ENCODE measurements at regions of chr1 and their contacts with region 1.

Region 1: DNA sequence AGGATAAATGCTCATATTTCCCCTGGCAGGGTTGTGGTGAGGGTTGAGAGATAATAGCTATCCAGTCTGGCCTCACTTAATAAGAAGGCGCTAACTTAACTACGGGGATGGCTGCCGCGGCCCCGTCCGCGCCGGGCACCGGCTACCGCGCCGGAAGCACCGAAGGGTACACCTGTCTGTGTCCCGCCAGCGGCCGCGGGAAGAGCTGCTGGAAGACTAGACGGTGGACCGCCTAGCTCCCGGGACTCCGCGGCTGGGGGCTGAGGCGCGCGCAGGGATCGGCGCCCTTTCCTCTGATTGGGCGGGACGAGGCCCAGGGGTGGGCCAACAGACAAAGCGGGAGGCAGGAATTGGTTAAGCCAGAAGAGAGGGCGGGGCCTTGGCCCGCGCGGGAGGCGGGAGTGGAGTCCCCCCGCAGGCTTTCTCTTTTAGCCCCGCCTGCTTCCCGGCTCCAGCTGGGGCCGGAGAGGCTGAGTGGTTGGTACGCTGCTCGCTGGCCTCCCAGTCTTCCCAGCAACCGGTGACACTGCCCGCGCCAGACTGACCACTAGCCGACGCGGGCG is at the start of gene ZNF672:
- DNase-seq: peak; percentile 97 to 98
- H3K4me3 ChIP-seq: peak within 1 kb of the TSS; percentile 87
- H3K4me3 Mint-ChIP-seq: no peak within 1 kb of the TSS
- H3K27ac Mint-ChIP-seq: peak within 1 kb of the TSS; percentile 95
- H3K4me1 ChIP-seq: no peaks in the 10 kb centered on the region
- H3K4me1 Mint-ChIP-seq: no peaks in the 10 kb centered on the region
- H3K27me3 ChIP-seq: no peaks in the 10 kb centered on the region
- H3K27me3 Mint-ChIP-seq: peaks cover 3% of the 10 kb centered on the region
- CTCF ChIP-seq: no peak
- total RNA-seq, gene ZNF672: 27.3 and 29.1 TPM in 2 replicates

Region 2: DNA sequence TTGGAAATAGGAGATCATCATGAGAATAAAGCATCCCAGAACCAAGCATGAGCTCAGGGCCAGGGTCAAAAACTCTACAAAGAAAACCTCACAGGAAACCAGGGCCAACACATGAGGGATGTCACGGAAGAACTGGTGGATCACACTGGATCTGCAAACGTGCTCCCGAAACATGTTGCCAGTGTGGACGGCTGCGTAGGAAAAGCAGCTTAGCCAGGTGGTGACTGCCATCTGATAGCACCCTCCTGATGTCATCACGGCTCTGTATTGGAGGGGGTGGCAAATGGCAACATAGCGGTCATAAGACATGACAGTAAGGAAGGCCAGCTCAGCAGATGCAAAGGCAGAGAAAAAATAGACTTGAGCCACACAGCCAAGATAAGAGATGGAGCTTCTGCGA is 156.2 kb before region 1 on chr1:
- CTCF ChIA-PET with region 1: no interaction called
- POLR2A ChIA-PET with region 1: no interaction called
- intact Hi-C with region 1: no loop called
- DNase-seq: no peak
- H3K4me3 ChIP-seq: no peak overlapping the region
- H3K4me3 Mint-ChIP-seq: no peak overlapping the region
- H3K27ac Mint-ChIP-seq: no peak overlapping the region
- H3K4me1 ChIP-seq: no peaks in the 10 kb centered on the region
- H3K4me1 Mint-ChIP-seq: no peaks in the 10 kb centered on the region
- H3K27me3 ChIP-seq: no peaks in the 10 kb centered on the region
- H3K27me3 Mint-ChIP-seq: no peaks in the 10 kb centered on the region
- CTCF ChIP-seq: no peak

Region 3: GRCh38 chr1:248739572-248740205 is 98.2 kb before region 1 on chr1:
- CTCF ChIA-PET with region 1: no interaction called
- POLR2A ChIA-PET with region 1: no interaction called
- intact Hi-C with region 1: no loop called
- DNase-seq: no peak
- H3K4me3 ChIP-seq: no peak overlapping the region
- H3K4me3 Mint-ChIP-seq: no peak overlapping the region
- H3K27ac Mint-ChIP-seq: no peak overlapping the region
- H3K4me1 ChIP-seq: no peaks in the 10 kb centered on the region
- H3K4me1 Mint-ChIP-seq: no peaks in the 10 kb centered on the region
- H3K27me3 ChIP-seq: no peaks in the 10 kb centered on the region
- H3K27me3 Mint-ChIP-seq: no peaks in the 10 kb centered on the region
- CTCF ChIP-seq: no peak

Region 4: GRCh38 chr1:248807067-248807737 is 30.7 kb before region 1 on chr1:
- CTCF ChIA-PET with region 1: no interaction called
- POLR2A ChIA-PET with region 1: no interaction called
- intact Hi-C with region 1: no loop called
- DNase-seq: peak; percentile 64 to 65
- H3K4me3 ChIP-seq: no peak overlapping the region
- H3K4me3 Mint-ChIP-seq: no peak overlapping the region
- H3K27ac Mint-ChIP-seq: no peak overlapping the region
- H3K4me1 ChIP-seq: no peaks in the 10 kb centered on the region
- H3K4me1 Mint-ChIP-seq: peaks cover 7% of the 10 kb centered on the region
- H3K27me3 ChIP-seq: no peaks in the 10 kb centered on the region
- H3K27me3 Mint-ChIP-seq: no peaks in the 10 kb centered on the region
- CTCF ChIP-seq: peak; percentile 72 to 82

Region 5: DNA sequence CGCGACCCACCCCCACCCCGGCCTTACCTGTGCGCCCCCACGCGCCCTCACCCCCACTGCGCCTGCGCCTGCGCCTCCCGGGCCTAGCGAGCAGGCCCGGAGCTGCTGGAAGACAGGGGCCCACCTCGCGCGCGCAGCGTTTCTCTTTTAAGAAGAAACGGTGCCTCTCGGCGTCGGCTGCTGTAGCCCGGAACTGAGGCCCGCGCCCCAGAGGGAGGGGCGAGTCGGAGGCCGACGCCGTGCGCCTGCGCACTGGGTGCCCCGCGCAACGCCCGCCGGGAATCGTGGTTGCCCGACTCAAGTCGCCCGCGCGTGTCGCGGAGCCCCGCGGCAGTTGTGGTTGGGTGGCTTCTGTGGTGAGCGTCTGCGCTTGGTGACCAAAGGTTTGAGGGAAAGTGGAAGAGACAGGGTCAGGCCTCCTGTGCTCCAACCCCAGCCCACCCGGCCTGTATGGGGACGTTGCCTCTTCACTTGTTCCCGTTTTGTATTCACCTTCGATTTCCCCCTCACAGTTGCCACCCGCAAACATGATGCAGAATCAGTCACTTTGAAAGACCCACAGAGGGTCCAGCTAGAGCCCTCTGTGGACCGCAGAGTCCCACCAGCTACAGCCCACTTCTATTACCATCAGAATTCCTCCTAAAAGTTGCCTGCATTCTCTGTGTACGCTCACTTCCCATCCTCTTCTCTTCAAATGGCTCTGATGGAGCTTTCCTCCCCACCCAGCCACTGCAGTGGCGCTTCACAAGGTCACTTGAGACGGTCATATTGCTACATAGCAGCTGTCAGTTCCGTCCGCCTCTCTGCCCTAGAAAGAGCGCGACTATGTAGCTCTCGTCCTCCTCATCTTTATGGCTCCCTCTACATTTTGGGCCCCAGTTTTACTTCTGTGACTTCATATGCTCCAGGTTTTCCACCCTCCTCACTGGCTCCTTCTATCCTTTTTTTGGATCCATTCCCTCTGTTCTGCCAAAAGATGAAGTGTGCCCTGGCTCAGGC is 21.3 kb after region 1 on chr1 and contains the start of gene ZNF692:
- CTCF ChIA-PET with region 1: interaction called, 20 read pairs
- POLR2A ChIA-PET with region 1: interaction called, 38 read pairs
- intact Hi-C with region 1: loop called (anchors 1 kb)
- DNase-seq: peak; percentile 97
- H3K4me3 ChIP-seq: peak within 1 kb of the TSS; percentile 71
- H3K4me3 Mint-ChIP-seq: peak within 1 kb of the TSS; percentile 91
- H3K27ac Mint-ChIP-seq: peak within 1 kb of the TSS; percentile 87
- H3K4me1 ChIP-seq: peaks cover 25% of the 10 kb centered on the region
- H3K4me1 Mint-ChIP-seq: peaks cover 16% of the 10 kb centered on the region
- H3K27me3 ChIP-seq: no peaks in the 10 kb centered on the region
- H3K27me3 Mint-ChIP-seq: no peaks in the 10 kb centered on the region
- CTCF ChIP-seq: no peak
- total RNA-seq, gene ZNF692: 48.5 and 58.4 TPM in 2 replicates

Region 6: GRCh38 chr1:248873409-248873992 is 35.6 kb after region 1 on chr1:
- CTCF ChIA-PET with region 1: no interaction called
- POLR2A ChIA-PET with region 1: interaction called, 15 read pairs
- intact Hi-C with region 1: loop called (anchors 1 kb)
- DNase-seq: peak; percentile 95 to 97
- H3K4me3 ChIP-seq: peak overlapping the region; percentile 40
- H3K4me3 Mint-ChIP-seq: peak overlapping the region; percentile 98
- H3K27ac Mint-ChIP-seq: peak overlapping the region; percentile 95
- H3K4me1 ChIP-seq: peaks cover 6% of the 10 kb centered on the region; the same call in 1 of the 2 replicates
- H3K4me1 Mint-ChIP-seq: peaks cover 25% of the 10 kb centered on the region
- H3K27me3 ChIP-seq: no peaks in the 10 kb centered on the region
- H3K27me3 Mint-ChIP-seq: peaks cover 4% of the 10 kb centered on the region
- CTCF ChIP-seq: no peak

Measured in Caco-2 (cell line).